ENCODE measurements at regions of chr3 and their contacts with region 1.

Region 1: DNA sequence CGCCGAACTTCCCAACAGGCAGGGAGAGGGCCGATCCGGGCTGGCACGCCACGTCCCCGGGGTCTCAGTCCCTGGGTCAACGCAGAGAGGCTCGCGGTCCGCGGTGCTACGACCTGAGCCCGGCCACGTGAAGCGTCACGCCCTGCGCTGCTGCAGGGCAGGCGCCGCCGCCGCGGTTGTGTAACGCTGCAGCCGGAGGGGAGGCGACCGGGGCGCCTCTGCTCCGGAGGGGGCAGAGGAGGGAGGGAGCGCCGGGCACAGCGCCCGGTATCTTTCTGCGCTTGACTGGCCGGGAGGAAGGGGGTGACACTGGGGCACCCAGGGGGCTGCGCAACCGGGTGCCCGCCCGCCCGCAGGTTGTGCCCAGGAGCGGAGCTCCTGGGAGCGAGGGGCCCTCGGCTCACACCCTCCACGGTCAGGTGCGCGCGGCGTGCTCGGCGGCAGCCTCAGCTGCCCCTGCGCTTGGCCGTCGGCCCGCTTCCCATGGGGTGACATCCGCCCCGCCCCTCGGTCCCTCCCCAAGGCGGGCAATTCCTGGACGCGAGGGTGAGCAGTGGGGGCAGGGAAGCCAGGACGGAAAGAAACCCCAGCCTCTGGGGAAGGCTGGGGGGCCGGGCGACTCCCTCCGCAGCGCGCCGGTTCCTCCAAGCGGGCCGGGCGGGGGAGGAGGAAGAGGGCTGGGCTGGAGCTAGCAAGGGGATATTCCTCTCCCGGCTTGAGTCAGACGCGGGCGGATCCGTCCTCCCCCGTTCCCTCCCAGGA is 852 bp upstream of the BHLHE40 start:
- DNase-seq: peak; percentile 99
- ATAC-seq: peak; percentile 57
- H3K4me3 Mint-ChIP-seq: peak overlapping the region; percentile 93
- H3K27ac Mint-ChIP-seq: peak overlapping the region; percentile 98
- H3K4me1 Mint-ChIP-seq: peaks cover 39% of the 10 kb centered on the region
- H3K27me3 Mint-ChIP-seq: no peaks in the 10 kb centered on the region

Region 2: GRCh38 chr3:3984053-3984452 is 994.3 kb before region 1 on chr3:
- CTCF ChIA-PET with region 1: no interaction called
- POLR2A ChIA-PET with region 1: no interaction called
- intact Hi-C with region 1: no loop called
- DNase-seq: no peak
- ATAC-seq: no peak
- H3K4me3 Mint-ChIP-seq: no peak overlapping the region
- H3K27ac Mint-ChIP-seq: no peak overlapping the region
- H3K4me1 Mint-ChIP-seq: no peaks in the 10 kb centered on the region
- H3K27me3 Mint-ChIP-seq: no peaks in the 10 kb centered on the region

Region 3: GRCh38 chr3:4736284-4736861 is 242.0 kb before region 1 on chr3:
- CTCF ChIA-PET with region 1: interaction called, 4 read pairs
- POLR2A ChIA-PET with region 1: interaction called, 3 read pairs
- intact Hi-C with region 1: loop called (anchors 1 to 5 kb)
- DNase-seq: no peak
- ATAC-seq: no peak
- H3K4me3 Mint-ChIP-seq: no peak overlapping the region
- H3K27ac Mint-ChIP-seq: peak overlapping the region; percentile 63
- H3K4me1 Mint-ChIP-seq: peaks cover 55% of the 10 kb centered on the region
- H3K27me3 Mint-ChIP-seq: no peaks in the 10 kb centered on the region

Region 4: GRCh38 chr3:4826237-4827100 is 151.9 kb before region 1 on chr3:
- CTCF ChIA-PET with region 1: interaction called, 10 read pairs
- POLR2A ChIA-PET with region 1: interaction called, 7 read pairs
- intact Hi-C with region 1: loop called (anchors 1 kb)
- DNase-seq: no peak
- ATAC-seq: no peak
- H3K4me3 Mint-ChIP-seq: peak overlapping the region; percentile 62
- H3K27ac Mint-ChIP-seq: peak overlapping the region; percentile 87
- H3K4me1 Mint-ChIP-seq: peaks cover 95% of the 10 kb centered on the region
- H3K27me3 Mint-ChIP-seq: no peaks in the 10 kb centered on the region

Region 5: GRCh38 chr3:4888913-4889846 is 89.2 kb before region 1 on chr3:
- CTCF ChIA-PET with region 1: interaction called, 4 read pairs
- POLR2A ChIA-PET with region 1: interaction called, 3 read pairs
- intact Hi-C with region 1: loop called (anchors 1 kb)
- DNase-seq: peak; percentile 50
- ATAC-seq: peak; percentile 90
- H3K4me3 Mint-ChIP-seq: peak overlapping the region; percentile 5
- H3K27ac Mint-ChIP-seq: peak overlapping the region; percentile 83
- H3K4me1 Mint-ChIP-seq: peaks cover 37% of the 10 kb centered on the region
- H3K27me3 Mint-ChIP-seq: peaks cover 2% of the 10 kb centered on the region

Region 6: GRCh38 chr3:5006755-5007202 is 28.4 kb after region 1 on chr3:
- CTCF ChIA-PET with region 1: interaction called, 13 read pairs
- POLR2A ChIA-PET with region 1: interaction called, 5 read pairs
- intact Hi-C with region 1: loop called in 1 of 2 experiments (anchors 1 kb)
- DNase-seq: peak; percentile 90
- ATAC-seq: peak; percentile 94
- H3K4me3 Mint-ChIP-seq: peak overlapping the region; percentile 37
- H3K27ac Mint-ChIP-seq: peak overlapping the region; percentile 90
- H3K4me1 Mint-ChIP-seq: peaks cover 49% of the 10 kb centered on the region
- H3K27me3 Mint-ChIP-seq: peaks cover 6% of the 10 kb centered on the region

Region 7: DNA sequence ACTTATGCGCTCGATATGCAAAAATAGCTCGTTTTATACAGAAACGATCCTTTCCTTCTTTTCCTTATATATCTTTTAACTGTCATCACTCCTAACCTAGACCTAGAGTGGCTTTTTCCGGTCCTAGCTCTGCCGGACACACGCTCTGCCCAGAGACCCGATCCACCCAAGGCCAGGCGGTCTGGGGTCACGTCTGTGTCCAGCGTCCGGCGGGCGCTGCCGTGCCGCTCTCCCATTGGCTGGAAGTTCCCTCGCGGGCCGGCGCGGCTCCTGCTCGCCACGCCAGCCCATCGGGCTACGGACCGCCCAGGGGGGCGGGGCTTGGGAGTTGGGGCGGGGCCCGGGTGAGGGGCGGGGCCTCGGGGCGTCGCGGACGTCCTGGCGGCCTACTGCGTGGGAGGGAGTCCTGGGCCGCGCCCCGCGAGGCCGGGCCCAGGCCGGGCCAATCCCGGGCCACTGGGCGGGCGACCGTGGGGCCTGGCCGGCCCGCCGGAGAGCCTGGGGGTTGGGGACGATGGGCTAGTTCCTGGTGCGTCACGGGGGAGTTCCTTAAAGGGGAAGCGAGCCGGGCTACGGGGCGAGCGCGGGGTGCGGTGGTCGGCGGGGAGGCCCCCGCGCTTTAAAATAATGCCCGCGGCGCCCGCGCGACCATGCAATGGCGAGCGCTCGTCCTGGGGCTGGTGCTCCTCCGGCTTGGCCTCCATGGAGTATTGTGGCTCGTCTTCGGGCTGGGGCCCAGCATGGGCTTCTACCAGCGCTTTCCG is 209.0 kb after region 1 on chr3 and contains the start of gene EDEM1:
- CTCF ChIA-PET with region 1: interaction called, 6 read pairs
- POLR2A ChIA-PET with region 1: interaction called, 7 read pairs
- intact Hi-C with region 1: loop called in 1 of 2 experiments (anchors 1 kb)
- DNase-seq: peak; percentile 97
- ATAC-seq: peak; percentile 84
- H3K4me3 Mint-ChIP-seq: peak within 1 kb of the TSS; percentile 99
- H3K27ac Mint-ChIP-seq: peak within 1 kb of the TSS; percentile 99
- H3K4me1 Mint-ChIP-seq: peaks cover 23% of the 10 kb centered on the region
- H3K27me3 Mint-ChIP-seq: no peaks in the 10 kb centered on the region
- total RNA-seq, gene EDEM1: 105 to 175 TPM